ENCODE measurements at regions of chr12 and their contacts with region 1.

Region 1: DNA sequence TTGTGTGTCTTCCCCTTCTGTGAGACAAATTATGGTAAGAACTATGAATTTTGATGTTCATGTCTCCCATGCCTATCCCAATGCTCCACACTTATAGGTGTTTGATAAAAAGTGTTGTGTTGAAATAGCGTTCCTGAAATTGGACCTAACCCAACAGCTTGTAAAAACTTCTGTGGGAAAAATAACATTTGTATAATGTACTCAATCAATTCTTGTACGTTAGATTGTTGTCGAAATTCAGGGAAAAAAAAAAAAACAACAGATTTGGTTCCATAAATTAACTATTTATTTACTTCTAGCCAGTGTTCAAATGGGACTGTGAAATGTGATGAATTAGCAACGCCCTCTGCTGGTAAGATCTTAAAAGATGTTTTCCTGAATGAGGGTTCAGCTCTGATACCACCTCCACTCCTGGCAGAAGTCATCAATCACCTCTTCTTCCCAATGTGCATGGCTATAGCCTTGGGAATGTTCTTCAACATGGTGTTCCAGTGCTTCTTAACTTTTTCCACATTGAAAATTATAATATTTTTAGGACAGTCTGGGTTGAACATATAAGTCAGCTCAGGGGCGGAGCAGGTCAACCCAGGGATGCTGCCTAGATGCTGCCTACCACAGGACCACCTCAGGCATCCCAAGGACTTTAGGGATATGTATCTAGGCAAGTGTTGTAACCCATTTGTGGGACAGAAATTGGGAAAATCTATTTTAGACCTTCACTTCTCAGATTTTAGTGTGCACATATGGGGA is 170.6 kb downstream of the OTOGL start:
- DNase-seq: peak in 2 of 4 donors; percentile 31 to 46
- ATAC-seq: peak; percentile 81
- H3K4me3 ChIP-seq: no peak overlapping the region
- H3K27ac ChIP-seq: no peak overlapping the region
- H3K4me1 ChIP-seq: peaks cover 5 to 10% of the 10 kb centered on the region in 2 donors
- H3K27me3 ChIP-seq: no peaks in the 10 kb centered on the region
- CTCF ChIP-seq: peak; percentile 54 to 58

Region 2: DNA sequence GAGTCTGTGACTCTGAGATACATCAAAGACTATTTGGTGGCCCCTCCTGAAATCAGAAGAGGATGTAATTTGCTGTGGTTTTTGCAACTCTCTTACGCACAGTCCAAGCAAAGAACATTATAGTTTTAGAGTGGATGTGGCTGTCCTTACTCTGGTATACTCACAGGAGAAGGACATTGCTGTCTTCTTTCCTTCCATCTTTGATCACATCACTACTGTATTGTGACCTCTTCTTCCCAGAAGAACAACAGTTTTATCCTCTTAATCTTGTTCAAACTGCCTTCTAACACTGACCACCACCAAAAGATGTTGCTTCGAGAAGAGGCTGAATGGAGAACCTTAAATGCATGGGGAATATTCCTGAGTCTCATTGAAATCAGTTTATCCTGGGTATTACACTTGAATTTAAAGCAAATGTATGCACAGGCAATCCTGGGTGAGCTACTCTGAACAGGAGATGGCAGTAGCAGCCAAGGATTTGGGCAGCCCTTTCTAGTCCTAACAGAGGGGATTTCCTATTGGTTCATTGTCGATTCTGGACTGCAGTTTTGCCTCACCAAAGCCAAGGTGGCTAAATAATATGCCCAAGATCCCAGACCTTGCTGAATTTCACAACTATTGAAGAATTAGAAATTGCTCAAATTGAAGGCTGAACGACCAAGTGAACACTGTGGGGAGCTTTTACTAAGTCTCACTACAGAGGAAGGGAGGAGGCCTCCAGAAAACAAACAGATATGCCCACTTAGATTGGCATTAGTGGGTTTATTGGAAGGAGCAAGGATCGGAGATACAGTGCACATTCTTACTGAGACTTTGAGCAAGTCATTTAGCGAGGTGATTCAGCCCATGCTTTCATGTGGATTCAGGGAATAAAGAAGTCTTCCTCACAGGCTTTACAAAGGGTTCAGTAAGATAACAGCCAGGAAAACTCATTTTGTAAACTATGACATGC is 862.0 kb before region 1 on chr12:
- intact Hi-C with region 1: loop called in 1 of 2 experiments (anchors 10 kb)
- DNase-seq: peak in 2 of 4 donors; percentile 44 to 66
- ATAC-seq: peak; percentile 94
- H3K4me3 ChIP-seq: no peak overlapping the region
- H3K27ac ChIP-seq: no peak overlapping the region
- H3K4me1 ChIP-seq: no peaks in the 10 kb centered on the region
- H3K27me3 ChIP-seq: no peaks in the 10 kb centered on the region
- CTCF ChIP-seq: peak; percentile 40 to 54

Region 3: DNA sequence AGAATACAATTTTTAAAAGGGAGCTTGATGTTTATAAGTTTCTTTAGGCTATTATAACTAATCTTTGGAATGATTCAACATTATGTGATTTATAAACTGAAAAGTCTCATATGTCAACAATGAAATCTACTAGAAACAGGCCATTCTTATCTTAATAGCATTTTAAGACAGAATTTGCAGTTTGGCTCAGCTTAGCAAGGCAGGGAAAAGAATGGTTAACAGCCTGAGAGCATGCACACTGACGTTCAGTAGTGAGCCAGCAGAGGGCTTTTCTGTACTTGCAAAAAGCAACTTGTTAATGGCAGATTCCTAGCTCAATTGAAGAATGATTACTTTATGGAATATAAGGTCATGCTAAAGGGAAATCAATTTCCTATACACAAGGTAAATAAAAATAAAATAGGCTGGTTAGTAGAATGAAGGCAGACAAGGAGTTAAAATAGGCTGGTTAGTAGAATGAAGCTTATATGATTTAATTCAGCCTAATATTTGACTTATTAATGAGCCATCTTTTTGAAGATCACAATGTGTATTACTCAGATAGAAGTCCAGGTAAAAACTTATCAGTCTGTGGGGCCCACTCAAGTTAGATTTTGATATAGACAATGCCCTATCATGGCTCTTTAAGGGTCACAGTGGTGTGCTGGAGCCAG is 74.8 kb before region 1 on chr12:
- intact Hi-C with region 1: loop called in 1 of 2 experiments (anchors 10 kb)
- DNase-seq: peak in 2 of 4 donors; percentile 65 to 78
- ATAC-seq: peak; percentile 53
- H3K4me3 ChIP-seq: no peak overlapping the region
- H3K27ac ChIP-seq: no peak overlapping the region
- H3K4me1 ChIP-seq: no peaks in the 10 kb centered on the region
- H3K27me3 ChIP-seq: no peaks in the 10 kb centered on the region
- CTCF ChIP-seq: peak in 1 of 2 donors; percentile 29